ENCODE measurements at regions of chr19 and their contacts with region 1.

Region 1: DNA sequence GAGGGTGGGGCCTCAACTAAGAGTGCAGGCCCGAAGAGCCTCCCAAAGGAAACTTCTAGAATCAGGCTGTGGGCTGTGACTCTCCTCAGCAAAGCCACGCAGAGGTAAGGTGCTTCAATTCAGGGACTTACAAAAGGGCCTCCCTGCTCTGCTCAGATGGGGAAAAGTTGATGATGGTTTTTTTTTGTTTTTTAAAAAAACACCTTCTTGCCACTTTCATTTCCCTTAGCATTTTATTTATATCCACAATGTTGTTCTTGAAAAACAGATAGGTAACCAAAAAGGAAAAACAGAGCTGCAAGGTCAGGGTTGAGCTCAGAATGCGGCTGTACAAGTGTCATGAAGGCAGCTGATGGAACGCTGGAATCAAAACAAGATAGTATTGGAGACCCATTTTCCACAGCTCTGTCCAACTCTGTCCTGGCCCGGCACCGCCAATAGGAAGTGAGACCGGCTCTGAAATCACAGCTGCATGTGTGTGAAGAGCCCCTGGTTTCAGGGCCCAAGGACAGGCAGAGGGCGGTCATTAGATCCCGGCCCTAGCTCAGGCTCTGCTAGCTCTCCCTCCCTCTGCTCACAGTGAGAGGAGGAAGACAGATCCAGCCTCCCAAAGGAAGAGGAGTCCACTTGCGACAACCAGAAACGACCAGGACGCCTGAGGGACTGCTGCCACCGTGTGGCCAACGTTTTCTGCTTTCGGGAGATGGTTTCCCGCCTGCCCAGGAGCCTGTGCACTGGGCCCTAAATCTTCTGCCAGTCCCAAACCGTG is 58.3 kb downstream of the KLF2 start:
- DNase-seq: peak; percentile 80

Region 2: GRCh38 chr19:16247353-16248182 is 135.4 kb before region 1 on chr19:
- CTCF ChIA-PET with region 1: interaction called, 14 read pairs
- POLR2A ChIA-PET with region 1: no interaction called
- DNase-seq: peak; percentile 92

Region 3: GRCh38 chr19:16366056-16366432 is 16.9 kb before region 1 on chr19:
- CTCF ChIA-PET with region 1: no interaction called
- POLR2A ChIA-PET with region 1: no interaction called
- DNase-seq: no peak